Dendritic cell treated with granulocyte-macrophage colony-stimulating factor and Interleukin-4, amounts not matched to agents 40 ng/mL and 50 ng/mL, for 4 days (primary cell): ENCODE measurements at regions of chr3 and their contacts with region 1.

Region 1: DNA sequence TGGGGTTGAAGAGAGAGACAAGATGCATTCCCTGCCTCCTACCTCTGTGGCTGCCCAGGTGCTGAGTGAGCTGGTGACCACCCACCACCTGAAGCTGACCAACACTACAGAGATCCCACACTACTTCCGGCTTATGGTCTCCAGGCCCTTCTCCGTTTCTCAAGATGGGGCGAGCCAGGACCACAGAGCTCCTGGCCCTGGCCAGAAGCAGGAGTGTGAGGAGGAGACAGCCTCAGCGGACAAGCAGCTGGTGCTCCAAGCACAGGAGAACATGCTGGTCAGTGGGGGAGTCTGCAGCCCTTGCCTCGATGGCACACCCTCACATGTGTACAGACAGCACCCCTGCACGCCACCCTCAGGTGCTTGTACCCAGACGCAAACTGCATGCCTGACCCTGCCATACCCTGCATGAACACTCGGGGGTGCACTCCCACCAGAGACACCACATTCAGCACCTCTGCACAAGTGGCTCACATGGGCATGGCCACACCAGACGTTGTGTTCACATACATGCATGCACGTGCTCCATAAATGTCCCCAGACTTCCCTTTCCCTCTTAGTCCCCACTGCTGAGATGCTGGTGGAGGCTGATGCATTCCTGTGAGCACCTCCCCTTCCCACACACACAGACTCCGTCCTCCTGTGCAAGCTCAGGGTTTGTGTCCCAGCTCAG is 19.0 kb downstream of the ACAA1 start:
- H3K4me3 Mint-ChIP-seq: no peak overlapping the region
- H3K27ac Mint-ChIP-seq: no peak overlapping the region
- H3K4me1 Mint-ChIP-seq: peaks cover 5% of the 10 kb centered on the region
- H3K27me3 Mint-ChIP-seq: no peaks in the 10 kb centered on the region

Region 2: DNA sequence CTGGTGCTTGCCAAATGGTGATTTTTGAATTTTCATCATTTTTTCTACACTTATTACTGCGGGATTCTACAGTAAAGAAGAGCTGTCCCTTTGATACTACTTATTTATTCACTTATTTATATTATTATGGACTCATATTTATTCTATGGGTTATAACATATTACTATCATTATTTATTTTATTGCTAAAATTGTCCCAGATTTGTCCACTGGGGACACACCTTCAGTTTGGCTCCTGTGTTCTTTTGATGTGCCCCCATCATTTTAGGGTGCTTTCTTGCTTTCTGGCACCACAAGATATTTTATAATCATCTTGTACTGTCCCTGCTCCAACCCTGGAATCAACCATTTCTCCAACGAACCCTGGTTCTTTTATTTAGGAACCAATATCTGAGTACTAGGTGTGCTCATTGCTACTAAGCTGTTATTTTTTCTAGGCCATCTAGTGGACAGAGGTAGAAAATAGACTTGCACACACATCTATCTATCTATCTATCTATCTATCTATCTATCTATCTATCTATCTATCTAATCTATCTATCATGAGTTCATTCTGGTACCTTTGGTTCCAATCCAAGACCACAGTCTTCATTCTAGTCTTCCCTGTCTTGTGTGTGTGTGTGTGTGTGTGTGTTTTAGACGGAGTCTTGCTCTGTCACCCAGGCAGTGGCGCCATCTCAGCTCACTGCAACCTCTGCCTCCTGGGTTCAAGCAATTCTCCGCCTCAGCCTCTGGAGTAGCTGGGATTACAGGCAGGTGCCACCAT is 180.2 kb after region 1 on chr3:
- intact Hi-C with region 1: loop called (anchors 2 kb)
- H3K4me3 Mint-ChIP-seq: no peak overlapping the region
- H3K27ac Mint-ChIP-seq: no peak overlapping the region
- H3K4me1 Mint-ChIP-seq: no peaks in the 10 kb centered on the region
- H3K27me3 Mint-ChIP-seq: peaks cover 4% of the 10 kb centered on the region